Mammary epithelial cell (primary cell): ENCODE measurements at regions of chr17 and their contacts with region 1.

Region 1: GRCh38 chr17:75131280-75132017 is at the start of gene NT5C:
- DNase-seq: peak; percentile 69
- H3K4me3 ChIP-seq: peak within 1 kb of the TSS; percentile 72 to 97 (median 87)
- H3K27ac ChIP-seq: peak within 1 kb of the TSS; percentile 67
- H3K4me1 ChIP-seq: peaks cover 25% of the 10 kb centered on the region
- H3K27me3 ChIP-seq: no peaks in the 10 kb centered on the region
- CTCF ChIP-seq: peak; percentile 26 to 69
- total RNA-seq, gene NT5C: 45.7 to 65.7 TPM

Region 2: GRCh38 chr17:75077496-75078283 is 53.8 kb before region 1 on chr17:
- CTCF ChIA-PET with region 1: no interaction called
- dilution Hi-C with region 1: loop called (anchors 5 kb)
- in situ Hi-C with region 1: no loop called
- intact Hi-C with region 1: no loop called
- DNase-seq: no peak
- H3K4me3 ChIP-seq: no peak overlapping the region
- H3K27ac ChIP-seq: no peak overlapping the region
- H3K4me1 ChIP-seq: peaks cover 22% of the 10 kb centered on the region
- H3K27me3 ChIP-seq: no peaks in the 10 kb centered on the region
- CTCF ChIP-seq: no peak

Region 3: DNA sequence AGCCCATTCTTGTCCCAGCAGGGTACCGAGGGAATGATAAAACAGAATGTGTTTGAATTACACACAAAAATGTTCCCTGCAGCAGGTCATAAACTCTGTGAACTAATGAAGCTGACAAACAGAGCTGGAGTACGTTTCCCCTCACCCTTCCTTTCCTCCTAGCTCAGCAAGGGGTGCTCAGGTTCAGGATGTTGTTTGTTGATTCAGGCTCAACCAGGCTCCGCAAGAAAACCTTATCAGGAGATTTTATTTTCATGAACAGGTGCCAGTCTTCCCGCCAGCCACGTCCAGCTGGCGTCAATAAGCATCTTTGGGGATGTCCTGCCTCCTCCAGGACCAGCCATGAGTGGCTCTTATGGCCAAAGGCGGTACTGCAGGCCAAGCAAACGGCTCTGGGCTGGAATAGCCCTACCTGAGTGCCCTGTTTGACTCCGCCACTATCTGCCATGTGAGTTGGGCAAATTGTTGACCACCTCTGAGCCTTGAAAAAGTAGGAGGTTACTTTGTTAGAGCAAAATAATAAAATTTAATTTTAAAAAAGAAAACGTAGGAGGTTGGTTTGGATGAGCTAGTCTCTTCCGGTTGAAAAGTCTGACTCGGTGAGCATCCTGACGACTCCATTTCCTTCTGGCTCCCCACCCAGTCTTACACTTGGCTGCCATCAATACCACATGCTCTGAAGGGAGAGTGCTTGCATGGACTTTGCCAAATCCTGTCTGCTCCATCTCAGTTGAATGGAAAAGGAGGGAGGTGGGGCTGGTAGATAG is 25.6 kb before region 1 on chr17:
- CTCF ChIA-PET with region 1: no interaction called
- dilution Hi-C with region 1: no loop called
- in situ Hi-C with region 1: no loop called
- intact Hi-C with region 1: no loop called
- DNase-seq: no peak
- H3K4me3 ChIP-seq: no peak overlapping the region
- H3K27ac ChIP-seq: no peak overlapping the region
- H3K4me1 ChIP-seq: peaks cover 10% of the 10 kb centered on the region
- H3K27me3 ChIP-seq: no peaks in the 10 kb centered on the region
- CTCF ChIP-seq: peak; percentile 74 to 79

Region 4: DNA sequence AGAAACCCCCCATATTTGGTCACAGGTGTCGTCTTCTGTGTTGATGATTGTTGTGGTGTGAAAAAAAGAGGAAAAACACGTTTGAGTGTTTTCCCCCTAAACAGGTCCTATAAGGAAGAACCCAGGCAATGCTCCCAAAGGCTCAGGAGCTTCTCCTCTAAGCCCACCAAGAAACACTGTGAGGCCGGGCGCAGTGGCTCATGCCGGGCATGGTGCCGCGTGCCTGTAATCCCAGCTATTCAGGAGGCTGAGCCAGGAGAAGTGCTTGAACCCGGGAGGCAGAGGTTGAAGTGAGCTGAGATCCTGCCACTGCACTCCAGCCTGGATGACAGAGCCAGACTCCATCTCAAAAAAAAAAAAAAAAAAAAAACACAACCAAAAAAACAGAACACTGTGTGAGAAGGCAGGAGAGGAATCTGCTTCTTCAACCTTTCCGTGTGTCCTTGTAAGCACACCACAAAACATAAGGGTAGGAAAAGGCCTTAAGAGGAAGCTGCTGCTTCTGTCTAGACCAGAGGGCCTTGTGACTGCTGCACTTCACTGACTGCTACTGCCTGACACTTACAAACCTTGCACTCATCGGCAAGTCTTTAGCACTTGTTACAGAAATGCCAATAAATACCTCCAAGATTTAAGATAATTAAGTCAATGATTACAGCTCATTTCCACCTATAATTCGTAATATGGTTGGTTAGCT is 13.5 kb after region 1 on chr17:
- CTCF ChIA-PET with region 1: no interaction called
- dilution Hi-C with region 1: no loop called
- in situ Hi-C with region 1: no loop called
- intact Hi-C with region 1: no loop called
- DNase-seq: no peak
- H3K4me3 ChIP-seq: no peak overlapping the region
- H3K27ac ChIP-seq: no peak overlapping the region
- H3K4me1 ChIP-seq: no peaks in the 10 kb centered on the region
- H3K27me3 ChIP-seq: no peaks in the 10 kb centered on the region
- CTCF ChIP-seq: no peak